MCF 10A (cell line): ENCODE measurements at regions of chr3 and their contacts with region 1.

Region 1: GRCh38 chr3:49673715-49674496 is at the start of gene APEH:
- DNase-seq: peak; percentile 98
- H3K4me3 Mint-ChIP-seq: peak within 1 kb of the TSS; percentile 93
- H3K27ac Mint-ChIP-seq: peak within 1 kb of the TSS; percentile 99
- H3K4me1 Mint-ChIP-seq: peaks cover 6% of the 10 kb centered on the region
- H3K27me3 Mint-ChIP-seq: no peaks in the 10 kb centered on the region
- CTCF ChIP-seq: no peak
- total RNA-seq, gene APEH: 95.8 and 127 TPM in 2 replicates

Region 2: GRCh38 chr3:49553692-49554632 is 119.9 kb before region 1 on chr3 and contains the start of gene BSN:
- CTCF ChIA-PET with region 1: interaction called, 20 read pairs
- POLR2A ChIA-PET with region 1: interaction called, 5 read pairs
- intact Hi-C with region 1: no loop called
- DNase-seq: peak; percentile 64
- H3K4me3 Mint-ChIP-seq: peak within 1 kb of the TSS; percentile 76
- H3K27ac Mint-ChIP-seq: no peak within 1 kb of the TSS
- H3K4me1 Mint-ChIP-seq: peaks cover 4% of the 10 kb centered on the region
- H3K27me3 Mint-ChIP-seq: peaks cover 40% of the 10 kb centered on the region
- CTCF ChIP-seq: no peak
- total RNA-seq, gene BSN: 0.10 and 0.37 TPM in 2 replicates

Region 3: GRCh38 chr3:49566312-49566711 is 107.6 kb before region 1 on chr3:
- CTCF ChIA-PET with region 1: interaction called, 4 read pairs
- POLR2A ChIA-PET with region 1: no interaction called
- intact Hi-C with region 1: loop called (anchors 1 kb)
- DNase-seq: peak; percentile 16
- H3K4me3 Mint-ChIP-seq: no peak overlapping the region
- H3K27ac Mint-ChIP-seq: no peak overlapping the region
- H3K4me1 Mint-ChIP-seq: peaks cover 6% of the 10 kb centered on the region
- H3K27me3 Mint-ChIP-seq: peaks cover 24% of the 10 kb centered on the region
- CTCF ChIP-seq: peak; percentile 45

Region 4: GRCh38 chr3:49638445-49638844 is 35.5 kb before region 1 on chr3:
- CTCF ChIA-PET with region 1: interaction called, 11 read pairs
- POLR2A ChIA-PET with region 1: interaction called, 5 read pairs
- intact Hi-C with region 1: no loop called
- DNase-seq: peak; percentile 91
- H3K4me3 Mint-ChIP-seq: peak overlapping the region; percentile 15
- H3K27ac Mint-ChIP-seq: no peak overlapping the region
- H3K4me1 Mint-ChIP-seq: peaks cover 22% of the 10 kb centered on the region
- H3K27me3 Mint-ChIP-seq: no peaks in the 10 kb centered on the region
- CTCF ChIP-seq: no peak